A549 (cell line): ENCODE measurements at regions of chr11 and their contacts with region 1.

Region 1: GRCh38 chr11:74726547-74727182 is 4.6 kb downstream of the CHRDL2 start:
- DNase-seq: peak; percentile 74 to 91
- ATAC-seq: peak; percentile 92 to 96
- H3K4me3 ChIP-seq: no peak overlapping the region
- H3K27ac ChIP-seq: peak overlapping the region; percentile 44 to 68; a peak in 4 of 6 replicates
- H3K4me1 ChIP-seq: peaks cover 15% of the 10 kb centered on the region
- CTCF ChIP-seq: peak; percentile 88
- EP300 ChIP-seq: no peak
- POLR2A ChIP-seq: no peak
- RAD21 ChIP-seq: peak; percentile 85 to 89

Region 2: GRCh38 chr11:74347381-74347780 is 379.3 kb before region 1 on chr11:
- CTCF ChIA-PET with region 1: no interaction called
- POLR2A ChIA-PET with region 1: no interaction called
- DNase-seq: no peak
- ATAC-seq: peak in 1 of 2 experiments; percentile 42; a peak in 1 of 6 replicates
- H3K4me3 ChIP-seq: no peak overlapping the region
- H3K27ac ChIP-seq: no peak overlapping the region
- H3K4me1 ChIP-seq: peaks cover 8% of the 10 kb centered on the region
- CTCF ChIP-seq: no peak
- EP300 ChIP-seq: no peak
- POLR2A ChIP-seq: no peak
- RAD21 ChIP-seq: no peak

Region 3: GRCh38 chr11:74611369-74611861 is 115.2 kb before region 1 on chr11:
- CTCF ChIA-PET with region 1: interaction called, 47 read pairs
- POLR2A ChIA-PET with region 1: no interaction called
- DNase-seq: peak; percentile 18 to 82
- ATAC-seq: peak; percentile 69 to 78
- H3K4me3 ChIP-seq: no peak overlapping the region
- H3K27ac ChIP-seq: peak overlapping the region; percentile 66 to 79
- H3K4me1 ChIP-seq: peaks cover 22% of the 10 kb centered on the region
- CTCF ChIP-seq: peak; percentile 65
- EP300 ChIP-seq: no peak
- POLR2A ChIP-seq: no peak
- RAD21 ChIP-seq: peak; percentile 53 to 67

Region 4: GRCh38 chr11:74663315-74663714 is 63.4 kb before region 1 on chr11:
- CTCF ChIA-PET with region 1: interaction called, 19 read pairs
- POLR2A ChIA-PET with region 1: no interaction called
- DNase-seq: no peak
- ATAC-seq: no peak
- H3K4me3 ChIP-seq: no peak overlapping the region
- H3K27ac ChIP-seq: no peak overlapping the region
- H3K4me1 ChIP-seq: no peaks in the 10 kb centered on the region
- CTCF ChIP-seq: no peak
- EP300 ChIP-seq: no peak
- POLR2A ChIP-seq: no peak
- RAD21 ChIP-seq: no peak

Region 5: GRCh38 chr11:74696932-74697687 is 29.6 kb before region 1 on chr11:
- CTCF ChIA-PET with region 1: interaction called, 241 read pairs
- POLR2A ChIA-PET with region 1: no interaction called
- DNase-seq: peak; percentile 56 to 85
- ATAC-seq: peak; percentile 71 to 85
- H3K4me3 ChIP-seq: no peak overlapping the region
- H3K27ac ChIP-seq: peak overlapping the region; percentile 84 to 88
- H3K4me1 ChIP-seq: peaks cover 51% of the 10 kb centered on the region
- CTCF ChIP-seq: no peak
- EP300 ChIP-seq: peak; percentile 53 to 72; a peak in 1 of 5 replicates
- POLR2A ChIP-seq: no peak
- RAD21 ChIP-seq: no peak

Region 6: DNA sequence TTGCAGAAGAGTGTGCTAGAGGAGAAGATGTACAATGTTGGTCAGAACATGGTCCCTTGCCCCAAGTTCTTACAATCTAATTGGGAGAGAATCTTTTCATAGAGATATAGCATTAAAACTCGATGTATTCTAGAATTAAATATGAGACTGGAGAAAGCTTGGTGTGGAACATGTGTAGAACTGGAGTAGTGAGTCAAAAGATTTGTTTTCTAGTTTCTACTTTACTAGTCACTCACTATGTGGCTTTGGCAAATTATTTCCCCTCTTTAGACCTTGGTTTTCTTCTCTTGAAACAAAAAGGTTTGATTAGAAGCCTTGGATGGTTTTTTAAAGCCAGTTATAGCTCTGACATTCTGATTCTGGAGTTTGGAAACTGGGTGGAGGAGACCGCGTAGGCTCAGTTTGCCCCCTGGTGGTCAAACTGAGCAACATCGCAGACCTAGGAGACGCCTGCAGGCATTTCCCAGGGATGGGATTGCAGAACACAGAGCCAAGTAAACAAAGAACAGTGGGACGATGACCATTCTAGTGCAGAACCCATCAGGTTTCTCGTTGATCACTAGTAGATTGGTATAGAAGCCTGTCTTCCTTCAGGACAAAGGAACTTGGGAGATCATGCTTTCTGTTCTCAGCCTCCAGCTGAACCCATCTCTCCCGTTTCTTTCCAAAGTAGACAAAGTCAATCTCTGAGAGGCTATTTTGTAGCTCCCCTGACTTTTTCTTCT is 13.0 kb after region 1 on chr11:
- CTCF ChIA-PET with region 1: interaction called, 98 read pairs
- POLR2A ChIA-PET with region 1: no interaction called
- DNase-seq: peak; percentile 74 to 87
- ATAC-seq: peak; percentile 96 to 97
- H3K4me3 ChIP-seq: no peak overlapping the region
- H3K27ac ChIP-seq: peak overlapping the region in 1 of 2 experiments; percentile 16; a peak in 1 of 6 replicates
- H3K4me1 ChIP-seq: 0 out of 3 replicates have a peak, but pooled peaks cover 4% of the 10 kb centered on the region
- CTCF ChIP-seq: peak; percentile 94
- EP300 ChIP-seq: no peak
- POLR2A ChIP-seq: no peak
- RAD21 ChIP-seq: peak; percentile 86 to 88